Lower leg skin (tissue), 4 donors: ENCODE measurements at regions of chr5 and their contacts with region 1.

Region 1: DNA sequence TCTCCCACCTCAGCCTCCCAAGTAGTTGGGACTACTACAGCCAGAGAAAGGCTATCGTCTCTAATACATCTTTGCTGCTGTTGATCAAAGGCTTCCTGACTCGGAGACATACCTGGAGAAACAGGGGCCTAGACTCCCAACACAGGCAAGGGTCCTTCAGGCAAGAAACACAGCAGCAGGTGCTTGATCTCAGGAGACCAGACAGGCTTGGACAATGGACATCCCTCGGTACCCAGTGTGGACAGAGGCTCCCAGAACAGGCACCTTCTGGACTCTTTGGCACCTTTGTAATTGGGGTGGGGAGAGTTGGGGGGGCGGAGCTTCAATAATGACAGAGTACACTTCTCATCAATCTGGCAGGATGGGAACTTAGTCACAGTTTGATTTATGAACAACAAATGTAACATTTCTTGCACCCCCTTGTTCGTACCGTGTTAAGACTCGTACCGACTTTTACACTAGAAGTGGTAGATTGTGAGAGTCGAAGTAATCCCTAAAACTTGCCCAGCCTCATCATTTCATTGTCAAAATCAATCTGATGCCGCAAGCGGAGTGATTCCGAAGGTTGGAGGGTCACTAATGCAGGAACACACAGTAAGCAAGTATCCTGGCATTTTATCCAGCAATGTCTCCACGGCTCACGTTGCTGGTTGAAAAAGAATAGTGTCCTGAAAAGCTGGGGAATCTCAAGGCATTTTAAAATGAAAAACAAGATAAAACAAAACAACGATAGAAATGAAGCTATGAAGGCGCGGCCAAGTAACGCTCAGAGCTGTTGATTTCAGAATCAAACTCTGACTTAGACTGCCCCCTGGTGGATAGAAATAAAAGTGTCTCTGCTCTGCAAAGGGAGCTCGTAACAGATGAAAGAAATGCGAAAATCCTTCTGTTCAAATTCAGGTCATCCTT is 46.4 kb upstream of the STK32A start:
- DNase-seq: peak in 1 of 2 donors; percentile 35
- H3K4me3 ChIP-seq: no peak overlapping the region
- CTCF ChIP-seq: no peak
- POLR2A ChIP-seq: no peak

Region 2: GRCh38 chr5:146533260-146533857 is 655.1 kb before region 1 on chr5:
- intact Hi-C with region 1: loop called (anchors 5 kb)
- DNase-seq: peak in 1 of 2 donors; percentile 40
- H3K4me3 ChIP-seq: no peak overlapping the region
- CTCF ChIP-seq: no peak
- POLR2A ChIP-seq: no peak

Region 3: GRCh38 chr5:147140558-147140957 is 47.9 kb before region 1 on chr5:
- intact Hi-C with region 1: loop called (anchors 2 kb)
- DNase-seq: no peak
- H3K4me3 ChIP-seq: no peak overlapping the region
- CTCF ChIP-seq: no peak
- POLR2A ChIP-seq: no peak

Region 4: GRCh38 chr5:148145916-148146315 is 957.5 kb after region 1 on chr5:
- intact Hi-C with region 1: no loop called
- DNase-seq: no peak
- H3K4me3 ChIP-seq: no peak overlapping the region
- CTCF ChIP-seq: no peak
- POLR2A ChIP-seq: no peak